ENCODE measurements at regions of chr22 and their contacts with region 1.

Region 1: GRCh38 chr22:42856865-42857704 is at the start of gene ARFGAP3:
- DNase-seq: peak; percentile 85 to 98 (median 94)
- ATAC-seq: peak; percentile 93
- H3K4me3 ChIP-seq: peak within 1 kb of the TSS; percentile 74
- H3K4me3 Mint-ChIP-seq: peak within 1 kb of the TSS; percentile 92
- H3K27ac ChIP-seq: peak within 1 kb of the TSS; percentile 86 to 87
- H3K27ac Mint-ChIP-seq: peak within 1 kb of the TSS; percentile 91
- H3K4me1 ChIP-seq: peaks cover 32% of the 10 kb centered on the region
- H3K4me1 Mint-ChIP-seq: peaks cover 12% of the 10 kb centered on the region
- H3K27me3 ChIP-seq: no peaks in the 10 kb centered on the region
- H3K27me3 Mint-ChIP-seq: no peaks in the 10 kb centered on the region
- CTCF ChIP-seq: no peak
- total RNA-seq, gene ARFGAP3: 19.5 to 21.4 TPM

Region 2: DNA sequence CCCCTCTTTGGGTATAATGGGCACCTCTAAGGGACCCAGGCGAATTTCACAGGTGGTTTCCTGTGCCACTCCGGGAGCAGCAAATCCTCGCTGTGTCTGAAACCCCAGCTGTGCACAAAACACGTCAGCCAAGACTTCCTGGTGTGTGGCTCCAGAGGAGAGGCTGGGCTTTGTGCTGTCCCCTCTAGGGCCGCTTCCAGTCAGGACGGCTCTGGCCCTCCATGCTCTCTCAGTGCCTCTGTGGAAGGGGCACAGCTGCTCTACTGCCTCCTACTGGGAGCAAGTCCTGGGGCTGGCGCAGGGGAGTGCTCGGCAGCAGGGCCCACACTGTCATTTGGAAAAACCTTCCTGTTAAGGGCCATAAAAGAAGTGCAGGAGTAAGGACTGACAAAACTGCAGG is 23.7 kb after region 1 on chr22:
- CTCF ChIA-PET with region 1: no interaction called
- POLR2A ChIA-PET with region 1: no interaction called
- intact Hi-C with region 1: no loop called
- DNase-seq: no peak
- ATAC-seq: no peak
- H3K4me3 ChIP-seq: no peak overlapping the region
- H3K4me3 Mint-ChIP-seq: no peak overlapping the region
- H3K27ac ChIP-seq: no peak overlapping the region
- H3K27ac Mint-ChIP-seq: no peak overlapping the region
- H3K4me1 ChIP-seq: no peaks in the 10 kb centered on the region
- H3K4me1 Mint-ChIP-seq: no peaks in the 10 kb centered on the region
- H3K27me3 ChIP-seq: no peaks in the 10 kb centered on the region
- H3K27me3 Mint-ChIP-seq: no peaks in the 10 kb centered on the region
- CTCF ChIP-seq: no peak

Region 3: DNA sequence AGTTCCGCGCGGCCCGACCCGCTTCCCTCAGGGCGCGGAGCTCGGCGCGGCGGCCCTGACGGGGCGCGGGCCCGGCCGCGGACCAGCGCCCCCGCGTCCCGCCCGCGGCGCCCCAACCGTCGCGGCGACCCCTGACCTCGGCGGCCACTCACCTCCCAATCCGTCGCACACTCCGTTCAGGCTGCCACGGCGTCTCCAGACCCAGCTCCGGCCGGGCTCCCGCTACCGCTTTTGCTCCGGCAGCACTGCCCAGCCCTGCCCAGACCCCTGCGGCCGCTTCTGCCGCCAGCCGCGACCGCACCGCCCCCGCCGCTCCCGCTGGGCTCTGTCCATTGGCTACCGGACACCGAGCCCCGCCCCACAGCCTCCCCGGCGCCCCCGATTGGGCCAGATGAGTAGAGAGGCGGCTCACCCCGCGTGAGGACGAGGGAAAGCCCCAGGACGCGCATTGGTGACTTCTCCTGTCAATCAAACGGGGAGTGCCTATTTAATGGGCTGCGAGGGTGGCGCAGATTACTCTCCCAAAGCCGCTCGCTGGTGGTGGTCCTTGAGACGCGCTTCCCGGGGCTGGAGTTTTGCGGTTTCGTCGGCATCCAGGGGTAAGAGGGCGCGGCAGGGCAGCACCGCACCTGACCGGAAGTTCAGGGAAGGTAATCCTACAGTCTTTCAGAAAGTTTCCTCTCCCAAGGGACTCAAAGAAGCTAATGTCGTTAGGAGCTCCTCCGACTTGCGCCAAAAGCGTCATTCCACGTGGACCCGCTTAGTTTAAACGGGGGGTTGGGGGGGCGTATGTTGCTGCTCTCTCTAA is 158.0 kb after region 1 on chr22 and contains the start of gene PACSIN2:
- CTCF ChIA-PET with region 1: no interaction called
- POLR2A ChIA-PET with region 1: interaction called, 3 read pairs
- intact Hi-C with region 1: loop called (anchors 1 to 5 kb)
- DNase-seq: peak; percentile 97 to 99 (median 99)
- ATAC-seq: peak; percentile 97
- H3K4me3 ChIP-seq: peak within 1 kb of the TSS; percentile 91
- H3K4me3 Mint-ChIP-seq: peak within 1 kb of the TSS; percentile 99
- H3K27ac ChIP-seq: peak within 1 kb of the TSS; percentile 75
- H3K27ac Mint-ChIP-seq: peak within 1 kb of the TSS; percentile 98
- H3K4me1 ChIP-seq: peaks cover 23% of the 10 kb centered on the region
- H3K4me1 Mint-ChIP-seq: peaks cover 38% of the 10 kb centered on the region
- H3K27me3 ChIP-seq: no peaks in the 10 kb centered on the region
- H3K27me3 Mint-ChIP-seq: no peaks in the 10 kb centered on the region
- CTCF ChIP-seq: no peak
- total RNA-seq, gene PACSIN2: 23.3 to 25.5 TPM